ENCODE measurements at regions of chr14 and their contacts with region 1.

Region 1: DNA sequence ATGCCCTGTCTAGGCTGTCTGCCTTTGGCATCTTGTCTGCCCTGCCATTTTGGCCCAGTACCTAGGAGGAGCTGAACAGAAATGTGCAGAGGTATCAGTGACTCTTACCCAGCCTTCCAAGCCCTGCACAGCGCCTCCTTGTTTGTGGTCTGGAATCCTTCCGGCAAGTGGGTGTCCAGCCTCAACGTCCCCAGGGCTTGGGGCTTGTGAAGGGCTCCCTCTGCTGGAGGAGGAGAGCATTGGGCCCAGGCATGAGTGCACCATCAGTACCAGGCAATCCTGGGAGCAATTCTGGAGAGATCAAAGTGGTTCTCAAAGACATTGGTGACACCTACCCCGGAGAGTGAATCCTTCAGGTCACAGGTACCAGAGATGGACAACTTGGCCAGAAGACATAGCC is 2.4 kb upstream of the TCL1B start:
- DNase-seq: peak in 1 of 2 experiments; percentile 74
- H3K4me3 ChIP-seq: no peak overlapping the region
- H3K27ac ChIP-seq: no peak overlapping the region
- H3K4me1 ChIP-seq: peaks cover 6 to 13% (median 9%) of the 10 kb centered on the region in 4 experiments
- H3K27me3 ChIP-seq: peaks cover 0 to 3% (median 0%) of the 10 kb centered on the region in 4 experiments; a peak in 3 of 7 replicates
- CTCF ChIP-seq: peak; percentile 94 to 97 (median 95)
- EP300 ChIP-seq: no peak
- POLR2A ChIP-seq: no peak
- RAD21 ChIP-seq: peak; percentile 91 to 94

Region 2: GRCh38 chr14:95577067-95577800 is 106.6 kb before region 1 on chr14:
- CTCF ChIA-PET with region 1: interaction called, 26 read pairs
- POLR2A ChIA-PET with region 1: no interaction called
- DNase-seq: no peak
- H3K4me3 ChIP-seq: no peak overlapping the region
- H3K27ac ChIP-seq: no peak overlapping the region
- H3K4me1 ChIP-seq: peaks cover 0 to 6% (median 2%) of the 10 kb centered on the region in 4 experiments; a peak in 6 of 7 replicates
- H3K27me3 ChIP-seq: peaks cover 0 to 6% (median 4%) of the 10 kb centered on the region in 4 experiments; a peak in 4 of 7 replicates
- CTCF ChIP-seq: no peak
- EP300 ChIP-seq: no peak
- POLR2A ChIP-seq: no peak
- RAD21 ChIP-seq: no peak

Region 3: GRCh38 chr14:95609387-95609990 is 74.3 kb before region 1 on chr14:
- CTCF ChIA-PET with region 1: interaction called, 12 read pairs
- POLR2A ChIA-PET with region 1: no interaction called
- DNase-seq: peak in 1 of 2 experiments; percentile 80
- H3K4me3 ChIP-seq: no peak overlapping the region
- H3K27ac ChIP-seq: no peak overlapping the region
- H3K4me1 ChIP-seq: no peaks in the 10 kb centered on the region; a peak in 1 of 7 replicates
- H3K27me3 ChIP-seq: peaks cover 0 to 4% (median 0%) of the 10 kb centered on the region in 4 experiments; a peak in 1 of 7 replicates
- CTCF ChIP-seq: peak; percentile 47 to 83 (median 82)
- EP300 ChIP-seq: no peak
- POLR2A ChIP-seq: no peak
- RAD21 ChIP-seq: peak; percentile 87 to 90

Region 4: GRCh38 chr14:95645389-95645996 is 38.3 kb before region 1 on chr14:
- CTCF ChIA-PET with region 1: interaction called, 11 read pairs
- POLR2A ChIA-PET with region 1: no interaction called
- DNase-seq: no peak
- H3K4me3 ChIP-seq: no peak overlapping the region
- H3K27ac ChIP-seq: no peak overlapping the region
- H3K4me1 ChIP-seq: no peaks in the 10 kb centered on the region
- H3K27me3 ChIP-seq: no peaks in the 10 kb centered on the region
- CTCF ChIP-seq: no peak
- EP300 ChIP-seq: no peak
- POLR2A ChIP-seq: no peak
- RAD21 ChIP-seq: no peak

Region 5: DNA sequence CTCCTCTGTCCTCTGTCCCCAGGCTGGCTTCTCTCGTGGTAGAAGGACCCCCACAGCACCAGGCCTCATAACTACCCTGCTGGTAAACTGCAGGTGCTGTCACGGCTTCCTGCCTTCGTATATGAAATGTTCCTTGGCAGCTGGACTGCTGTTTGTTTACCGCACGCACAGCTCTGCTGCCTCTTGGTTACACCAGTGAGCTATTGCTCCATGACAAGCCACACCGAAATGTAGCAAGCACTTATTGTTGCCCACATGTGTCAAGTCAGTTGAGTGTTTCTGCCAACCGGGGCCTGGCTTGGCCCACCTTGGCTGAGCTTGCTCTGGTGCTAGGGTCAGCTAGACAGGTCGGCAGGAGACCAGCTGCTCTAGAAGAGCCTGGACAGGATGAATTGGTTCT is 19.2 kb before region 1 on chr14:
- CTCF ChIA-PET with region 1: interaction called, 46 read pairs
- POLR2A ChIA-PET with region 1: no interaction called
- DNase-seq: no peak
- H3K4me3 ChIP-seq: no peak overlapping the region
- H3K27ac ChIP-seq: no peak overlapping the region
- H3K4me1 ChIP-seq: peaks cover 0 to 8% (median 6%) of the 10 kb centered on the region in 4 experiments; a peak in 6 of 7 replicates
- H3K27me3 ChIP-seq: peaks cover 0 to 3% (median 1%) of the 10 kb centered on the region in 4 experiments; a peak in 5 of 7 replicates
- CTCF ChIP-seq: no peak
- EP300 ChIP-seq: no peak
- POLR2A ChIP-seq: no peak
- RAD21 ChIP-seq: no peak